ENCODE measurements at regions of chr11 and their contacts with region 1.

Region 1: DNA sequence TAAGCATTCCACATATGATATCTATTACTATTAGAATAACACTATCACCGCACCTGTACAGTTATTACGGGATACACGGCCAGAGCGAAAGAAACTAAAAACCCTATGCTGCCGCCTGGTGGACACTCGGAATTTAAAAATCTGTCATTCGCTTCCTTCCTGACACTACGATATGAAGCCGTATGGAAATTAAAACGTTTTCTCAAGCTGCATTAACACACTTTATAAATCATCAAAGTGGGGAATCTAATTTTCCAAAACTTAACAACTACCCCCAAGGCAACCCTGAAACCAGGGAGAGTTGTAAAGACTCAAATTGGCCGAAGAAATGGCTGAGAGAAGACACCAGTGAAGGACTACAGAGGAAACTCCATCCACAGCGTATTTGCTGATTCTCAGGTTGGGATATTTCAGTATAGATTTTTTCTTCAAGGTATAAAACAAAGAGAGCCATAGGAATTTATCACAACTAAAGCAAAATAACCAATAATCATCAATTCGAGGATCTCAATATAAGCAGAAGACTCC is 1.4 kb downstream of the CCDC73 start:
- DNase-seq: no peak

Region 2: DNA sequence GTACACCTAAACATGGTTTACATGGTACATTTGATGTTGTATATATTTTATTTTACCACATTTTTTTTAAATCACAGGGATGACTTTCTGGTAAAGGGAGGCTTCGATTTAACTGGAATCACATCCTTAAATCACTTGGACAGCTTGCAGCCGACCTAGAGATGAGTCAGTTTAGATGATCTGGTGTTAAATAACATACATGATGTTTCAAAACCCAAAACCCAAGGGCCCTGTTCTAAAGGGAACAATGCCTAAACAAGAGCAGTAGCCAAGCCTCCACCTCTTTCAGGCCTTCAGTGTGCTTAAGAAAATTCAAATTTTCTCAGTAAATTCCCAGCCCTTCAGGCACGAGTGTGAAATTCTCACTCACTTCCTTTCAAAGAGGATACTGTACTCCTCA is 466.5 kb before region 1 on chr11:
- intact Hi-C with region 1: loop called in 1 of 2 experiments (anchors 5 kb)
- DNase-seq: no peak

Region 3: DNA sequence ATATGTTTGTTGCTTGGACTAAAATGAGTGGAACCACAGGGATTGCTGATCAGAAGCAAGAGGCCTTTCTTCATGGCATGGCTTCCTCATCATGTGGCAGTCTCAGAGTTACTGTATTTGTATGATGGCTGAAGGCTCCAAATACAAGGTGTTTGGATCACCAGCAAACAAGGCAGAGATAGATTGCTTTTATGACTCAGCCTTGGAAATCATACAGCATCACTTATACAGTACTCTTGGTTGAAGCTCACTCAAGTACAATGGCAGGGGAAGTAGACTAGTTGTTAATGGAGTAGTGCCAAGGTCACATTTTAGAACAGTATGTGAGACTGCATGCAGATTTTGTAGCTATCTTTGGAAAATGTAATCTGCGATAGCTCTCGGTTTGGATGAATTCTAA is 1275.1 kb after region 1 on chr11:
- intact Hi-C with region 1: no loop called
- DNase-seq: no peak

Measured in posterior vena cava (tissue), 2 donors.